Adrenal gland (tissue), 19 donors: ENCODE measurements at regions of chr7 and their contacts with region 1.

Region 1: GRCh38 chr7:131654668-131655326 is 98.4 kb upstream of the PODXL start:
- DNase-seq: peak; percentile 80 to 93 (median 86)
- H3K4me3 ChIP-seq: no peak overlapping the region
- H3K27ac ChIP-seq: no peak overlapping the region
- H3K4me1 ChIP-seq: no peaks in the 10 kb centered on the region
- H3K27me3 ChIP-seq: no peaks in the 10 kb centered on the region
- CTCF ChIP-seq: peak; percentile 81 to 98 (median 87)
- POLR2A ChIP-seq: no peak

Region 2: DNA sequence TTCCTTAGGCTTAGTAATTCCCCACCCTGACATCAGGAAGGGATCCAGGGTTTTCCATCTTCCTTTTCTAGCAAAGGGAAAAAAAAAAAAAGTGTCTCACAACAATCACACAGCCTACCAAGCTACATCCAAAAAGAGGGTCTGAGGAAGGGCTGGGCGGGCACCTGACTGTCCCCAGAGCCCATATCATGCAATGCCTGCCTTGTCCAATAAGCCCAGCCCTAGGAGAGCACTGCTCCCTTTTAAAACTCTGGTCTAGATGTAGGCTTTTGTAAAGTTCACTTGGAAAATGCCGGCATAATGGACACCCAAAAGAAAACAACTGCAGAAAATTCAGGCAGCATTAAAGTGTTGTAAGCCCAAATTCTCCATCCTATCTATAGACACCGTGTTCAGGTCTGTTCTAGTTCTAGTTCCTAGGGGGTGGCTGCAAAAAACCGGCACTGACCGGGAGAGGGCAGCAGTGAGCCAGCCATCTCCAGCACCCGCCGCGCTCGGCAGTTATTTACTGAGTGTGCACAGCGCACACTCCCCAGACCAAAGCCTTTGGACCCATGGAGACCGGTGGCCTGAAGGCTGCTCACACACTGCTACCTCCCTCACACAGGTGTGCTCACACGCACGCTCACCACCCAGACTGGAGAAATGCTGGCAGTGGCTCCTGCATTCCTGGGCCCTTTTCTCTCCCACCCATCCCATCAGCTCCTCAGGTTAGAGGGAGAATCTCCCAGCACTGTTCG is 147.0 kb before region 1 on chr7:
- intact Hi-C with region 1: loop called (anchors 5 kb)
- DNase-seq: peak; percentile 76 to 93 (median 87)
- H3K4me3 ChIP-seq: no peak overlapping the region
- H3K27ac ChIP-seq: no peak overlapping the region
- H3K4me1 ChIP-seq: peaks cover 11 to 21% of the 10 kb centered on the region in 2 donors
- H3K27me3 ChIP-seq: no peaks in the 10 kb centered on the region
- CTCF ChIP-seq: peak; percentile 74 to 93 (median 88)
- POLR2A ChIP-seq: no peak

Region 3: GRCh38 chr7:131959106-131959812 is 304.5 kb after region 1 on chr7:
- intact Hi-C with region 1: no loop called
- DNase-seq: no peak
- H3K4me3 ChIP-seq: no peak overlapping the region
- H3K27ac ChIP-seq: no peak overlapping the region
- H3K4me1 ChIP-seq: no peaks in the 10 kb centered on the region
- H3K27me3 ChIP-seq: no peaks in the 10 kb centered on the region
- CTCF ChIP-seq: no peak
- POLR2A ChIP-seq: no peak